ENCODE measurements at regions of chr2 and their contacts with region 1.

Region 1: GRCh38 chr2:108938077-108938710 is 50.8 kb downstream of the EDAR start:
- DNase-seq: no peak
- H3K4me3 ChIP-seq: no peak overlapping the region
- CTCF ChIP-seq: no peak

Region 2: DNA sequence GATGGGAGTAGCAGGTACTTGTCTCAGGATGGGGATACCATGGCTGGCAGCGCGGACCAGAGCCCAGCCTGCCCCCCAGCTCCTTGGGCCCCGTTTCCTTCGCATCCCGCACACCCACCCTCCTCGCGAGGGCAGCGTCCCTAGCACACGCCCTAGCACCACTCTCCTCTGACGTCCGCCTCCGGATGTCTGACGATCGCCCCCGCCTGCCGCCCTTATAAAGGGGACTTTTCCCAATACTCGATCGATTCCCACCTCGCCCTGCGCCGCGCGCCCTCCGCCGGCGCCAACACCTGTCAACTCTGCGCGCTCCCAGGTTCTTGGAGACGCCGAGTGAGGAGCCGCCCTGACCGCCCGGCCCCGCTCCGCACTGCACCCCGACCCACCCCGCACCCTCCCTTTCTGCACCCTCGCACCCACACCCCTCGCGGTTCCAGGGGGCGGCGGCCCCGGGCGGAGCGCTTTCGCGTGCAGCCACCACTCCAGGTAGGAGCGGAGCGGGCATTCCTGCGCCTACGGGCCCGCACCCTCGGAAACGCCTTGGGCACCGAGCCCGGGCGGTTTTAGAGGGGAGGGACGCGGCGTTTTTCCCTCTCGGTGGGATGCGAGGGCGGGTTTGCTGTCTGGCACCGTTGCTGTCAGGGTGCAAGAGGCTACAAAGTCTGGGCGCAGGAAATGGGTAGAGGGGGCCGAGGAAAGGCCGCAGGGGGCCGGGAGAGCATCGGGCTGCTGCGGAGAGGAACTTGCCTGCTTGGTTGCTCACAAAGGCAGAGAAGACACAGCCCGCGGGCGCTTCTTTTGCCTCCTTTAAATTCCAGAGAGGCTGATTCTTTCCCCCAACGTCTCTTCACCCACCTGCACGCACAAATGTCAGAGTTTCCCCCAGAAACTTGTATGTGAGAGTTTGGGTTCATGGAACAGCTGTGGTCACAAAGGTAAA is 951.6 kb before region 1 on chr2 and contains the start of gene SLC5A7:
- in situ Hi-C with region 1: no loop called
- DNase-seq: no peak
- H3K4me3 ChIP-seq: peak within 1 kb of the TSS; percentile 16
- CTCF ChIP-seq: no peak

Region 3: GRCh38 chr2:108971661-108972566 is 33.7 kb after region 1 on chr2:
- in situ Hi-C with region 1: loop called (anchors 5 kb)
- DNase-seq: no peak
- H3K4me3 ChIP-seq: no peak overlapping the region
- CTCF ChIP-seq: no peak